GM12878 (cell line): ENCODE measurements at regions of chr12 and their contacts with region 1.

Region 1: GRCh38 chr12:53159195-53159839 is 21.2 kb upstream of the ZNF740 start:
- DNase-seq: peak; percentile 72
- ATAC-seq: peak; percentile 99
- H3K4me3 ChIP-seq: no peak overlapping the region
- H3K27ac ChIP-seq: no peak overlapping the region
- H3K4me1 ChIP-seq: no peaks in the 10 kb centered on the region; the same call in 1 of the 2 replicates
- H3K27me3 ChIP-seq: no peaks in the 10 kb centered on the region
- CTCF ChIP-seq: peak; percentile 97 to 100 (median 99)
- EP300 ChIP-seq: no peak
- POLR2A ChIP-seq: no peak
- RAD21 ChIP-seq: peak; percentile 99

Region 2: GRCh38 chr12:53174881-53175491 is 15.7 kb after region 1 on chr12:
- CTCF ChIA-PET with region 1: interaction called, 66 read pairs
- POLR2A ChIA-PET with region 1: interaction called, 26 read pairs
- RAD21 ChIA-PET with region 1: interaction called, 36 read pairs
- SMC1A ChIA-PET with region 1: interaction called, 39 read pairs
- in situ Hi-C with region 1: no loop called
- intact Hi-C with region 1: loop called (anchors 2 kb)
- DNase-seq: no peak
- ATAC-seq: peak; percentile 48
- H3K4me3 ChIP-seq: no peak overlapping the region
- H3K27ac ChIP-seq: no peak overlapping the region
- H3K4me1 ChIP-seq: peaks cover 14% of the 10 kb centered on the region; the same call in 1 of the 2 replicates
- H3K27me3 ChIP-seq: no peaks in the 10 kb centered on the region
- CTCF ChIP-seq: peak in 2 of 3 experiments; percentile 19 to 33; a peak in 2 of 6 replicates
- EP300 ChIP-seq: no peak
- POLR2A ChIP-seq: no peak
- RAD21 ChIP-seq: peak; percentile 42

Region 3: GRCh38 chr12:53200458-53201176 is 41.3 kb after region 1 on chr12:
- CTCF ChIA-PET with region 1: interaction called, 188 read pairs
- POLR2A ChIA-PET with region 1: interaction called, 3 read pairs
- RAD21 ChIA-PET with region 1: interaction called, 25 read pairs
- SMC1A ChIA-PET with region 1: interaction called, 13 read pairs
- in situ Hi-C with region 1: no loop called
- intact Hi-C with region 1: no loop called
- DNase-seq: peak; percentile 79
- ATAC-seq: peak; percentile 61
- H3K4me3 ChIP-seq: peak overlapping the region; percentile 90
- H3K27ac ChIP-seq: peak overlapping the region; percentile 69
- H3K4me1 ChIP-seq: peaks cover 47% of the 10 kb centered on the region
- H3K27me3 ChIP-seq: no peaks in the 10 kb centered on the region
- CTCF ChIP-seq: no peak
- EP300 ChIP-seq: peak; percentile 76 to 87
- POLR2A ChIP-seq: no peak
- RAD21 ChIP-seq: no peak

Region 4: GRCh38 chr12:53220801-53221202 is 61.5 kb after region 1 on chr12:
- CTCF ChIA-PET with region 1: interaction called, 188 read pairs
- POLR2A ChIA-PET with region 1: interaction called, 3 read pairs
- RAD21 ChIA-PET with region 1: interaction called, 6 read pairs
- SMC1A ChIA-PET with region 1: interaction called, 25 read pairs
- in situ Hi-C with region 1: no loop called
- intact Hi-C with region 1: no loop called
- DNase-seq: peak; percentile 69
- ATAC-seq: peak; percentile 86
- H3K4me3 ChIP-seq: peak overlapping the region; percentile 86
- H3K27ac ChIP-seq: peak overlapping the region; percentile 79
- H3K4me1 ChIP-seq: peaks cover 22% of the 10 kb centered on the region
- H3K27me3 ChIP-seq: no peaks in the 10 kb centered on the region
- CTCF ChIP-seq: no peak
- EP300 ChIP-seq: no peak
- POLR2A ChIP-seq: no peak
- RAD21 ChIP-seq: no peak

Region 5: DNA sequence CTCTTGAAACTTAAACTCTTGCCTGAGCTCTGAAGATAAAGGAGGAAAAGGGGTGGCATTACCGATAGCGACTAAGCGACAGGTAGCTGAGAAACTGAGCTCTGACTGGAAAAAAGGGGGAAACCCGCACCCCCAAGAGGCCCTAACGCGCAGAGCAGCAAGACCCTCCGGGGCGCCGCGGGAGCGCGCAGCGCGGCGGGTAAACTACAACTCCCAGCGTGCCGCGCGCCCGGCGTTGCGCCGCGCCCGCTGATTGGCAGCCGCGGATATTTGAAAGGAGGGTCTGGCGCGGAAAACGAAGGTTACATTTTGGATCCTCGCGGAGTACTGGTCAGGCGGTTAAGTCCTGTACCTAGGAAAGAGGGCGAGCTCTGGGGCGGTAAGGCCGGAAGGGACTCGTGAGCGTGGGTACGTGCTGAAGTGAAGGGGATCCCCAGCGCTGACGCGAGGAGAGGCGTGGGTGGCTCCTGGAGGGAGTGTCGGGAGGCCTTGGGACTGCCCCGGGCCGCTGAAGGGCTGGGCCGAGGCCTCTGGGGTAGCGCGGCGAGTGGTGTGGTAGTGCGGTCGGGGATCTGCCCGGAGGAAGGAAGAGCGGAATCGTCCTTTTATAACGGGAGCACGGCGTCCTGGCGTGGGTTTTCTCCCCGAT is 108.8 kb after region 1 on chr12 and contains the start of gene ESPL1:
- CTCF ChIA-PET with region 1: interaction called, 48 read pairs
- POLR2A ChIA-PET with region 1: interaction called, 3 read pairs
- RAD21 ChIA-PET with region 1: interaction called, 16 read pairs
- SMC1A ChIA-PET with region 1: interaction called, 6 read pairs
- in situ Hi-C with region 1: no loop called
- intact Hi-C with region 1: no loop called
- DNase-seq: peak; percentile 58
- ATAC-seq: peak; percentile 93
- H3K4me3 ChIP-seq: peak within 1 kb of the TSS; percentile 77
- H3K27ac ChIP-seq: peak within 1 kb of the TSS; percentile 89
- H3K4me1 ChIP-seq: peaks cover 14% of the 10 kb centered on the region
- H3K27me3 ChIP-seq: no peaks in the 10 kb centered on the region
- CTCF ChIP-seq: peak; percentile 26 to 37 (median 33); a peak in 4 of 6 replicates
- EP300 ChIP-seq: no peak
- POLR2A ChIP-seq: peak; percentile 75
- RAD21 ChIP-seq: peak; percentile 47
- polyA plus RNA-seq, gene ESPL1: 2.1 to 2.2 TPM

Region 6: DNA sequence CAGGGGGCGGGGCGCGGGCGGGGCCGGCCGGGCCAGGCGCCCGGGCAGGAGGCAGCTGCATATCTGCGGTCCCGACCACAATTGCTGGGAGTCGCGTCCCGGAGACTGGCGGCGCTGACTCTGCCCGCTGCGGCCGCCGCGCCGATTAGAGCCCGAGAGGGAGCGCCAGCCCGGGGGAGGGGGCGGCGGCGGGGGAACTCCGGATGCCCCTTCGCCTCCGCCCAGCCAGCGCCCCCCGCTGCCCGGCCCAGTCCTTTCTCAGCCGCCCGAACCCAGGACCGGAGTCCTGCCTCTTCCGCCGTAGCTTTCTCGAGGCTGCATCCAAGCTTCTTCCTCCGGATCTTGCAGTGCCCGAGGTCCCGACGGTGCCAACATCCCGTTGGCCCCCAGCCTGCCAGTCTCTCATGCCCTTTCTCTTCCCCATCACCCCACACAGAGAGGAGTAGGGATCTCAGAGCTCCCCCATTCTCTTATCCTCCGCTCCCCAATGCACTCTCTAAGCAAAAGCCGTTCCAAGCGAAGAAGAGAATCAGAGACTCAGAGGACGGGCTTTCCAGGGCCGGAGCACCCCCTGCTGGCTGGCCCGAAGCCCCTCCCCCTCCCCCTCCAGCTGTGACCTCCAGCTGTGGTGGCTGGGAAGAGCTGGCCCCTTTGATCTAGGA is 185.6 kb after region 1 on chr12:
- CTCF ChIA-PET with region 1: interaction called, 22 read pairs
- POLR2A ChIA-PET with region 1: no interaction called
- RAD21 ChIA-PET with region 1: interaction called, 29 read pairs
- SMC1A ChIA-PET with region 1: interaction called, 13 read pairs
- in situ Hi-C with region 1: no loop called
- intact Hi-C with region 1: loop called (anchors 1 kb)
- DNase-seq: no peak
- ATAC-seq: peak; percentile 95
- H3K4me3 ChIP-seq: peak overlapping the region; percentile 80
- H3K27ac ChIP-seq: no peak overlapping the region
- H3K4me1 ChIP-seq: peaks cover 5% of the 10 kb centered on the region
- H3K27me3 ChIP-seq: peaks cover 0 to 5% of the 10 kb centered on the region in 2 experiments; a peak in 1 of 4 replicates
- CTCF ChIP-seq: peak; percentile 68 to 90 (median 87)
- EP300 ChIP-seq: no peak
- POLR2A ChIP-seq: 0 out of 2 replicates have a peak, but pooled peaks have one; percentile 32
- RAD21 ChIP-seq: peak; percentile 81